Breast epithelium (tissue), 4 donors: ENCODE measurements at regions of chr2 and their contacts with region 1.

Region 1: GRCh38 chr2:219119422-219120043 is 41.1 kb downstream of the NHEJ1 start:
- DNase-seq: peak in 1 of 2 donors; percentile 31
- H3K4me3 ChIP-seq: no peak overlapping the region
- H3K27ac ChIP-seq: no peak overlapping the region
- H3K4me1 ChIP-seq: no peaks in the 10 kb centered on the region
- H3K27me3 ChIP-seq: no peaks in the 10 kb centered on the region
- CTCF ChIP-seq: peak in 2 of 3 donors; percentile 55 to 74
- POLR2A ChIP-seq: no peak

Region 2: GRCh38 chr2:219087361-219087760 is 32.2 kb before region 1 on chr2:
- intact Hi-C with region 1: no loop called
- DNase-seq: no peak
- H3K4me3 ChIP-seq: no peak overlapping the region
- H3K27ac ChIP-seq: no peak overlapping the region
- H3K4me1 ChIP-seq: no peaks in the 10 kb centered on the region
- H3K27me3 ChIP-seq: no peaks in the 10 kb centered on the region
- CTCF ChIP-seq: no peak
- POLR2A ChIP-seq: no peak

Region 3: GRCh38 chr2:220334210-220334609 is 1214.7 kb after region 1 on chr2:
- intact Hi-C with region 1: loop called (anchors 10 kb)
- DNase-seq: peak in 1 of 2 donors; percentile 69
- H3K4me3 ChIP-seq: no peak overlapping the region
- H3K27ac ChIP-seq: no peak overlapping the region
- H3K4me1 ChIP-seq: no peaks in the 10 kb centered on the region
- H3K27me3 ChIP-seq: no peaks in the 10 kb centered on the region
- CTCF ChIP-seq: no peak
- POLR2A ChIP-seq: no peak